Lower lobe of right lung (tissue), 2 donors: ENCODE measurements at regions of chr5 and their contacts with region 1.

Region 1: GRCh38 chr5:18305297-18305924 is 671.2 kb downstream of the TAF11L14 start:
- DNase-seq: no peak
- ATAC-seq: peak in 1 of 2 donors; percentile 54
- H3K4me3 ChIP-seq: no peak overlapping the region
- H3K27ac ChIP-seq: no peak overlapping the region
- H3K4me1 ChIP-seq: no peaks in the 10 kb centered on the region
- H3K27me3 ChIP-seq: peaks cover 9% of the 10 kb centered on the region
- CTCF ChIP-seq: peak; percentile 59

Region 2: DNA sequence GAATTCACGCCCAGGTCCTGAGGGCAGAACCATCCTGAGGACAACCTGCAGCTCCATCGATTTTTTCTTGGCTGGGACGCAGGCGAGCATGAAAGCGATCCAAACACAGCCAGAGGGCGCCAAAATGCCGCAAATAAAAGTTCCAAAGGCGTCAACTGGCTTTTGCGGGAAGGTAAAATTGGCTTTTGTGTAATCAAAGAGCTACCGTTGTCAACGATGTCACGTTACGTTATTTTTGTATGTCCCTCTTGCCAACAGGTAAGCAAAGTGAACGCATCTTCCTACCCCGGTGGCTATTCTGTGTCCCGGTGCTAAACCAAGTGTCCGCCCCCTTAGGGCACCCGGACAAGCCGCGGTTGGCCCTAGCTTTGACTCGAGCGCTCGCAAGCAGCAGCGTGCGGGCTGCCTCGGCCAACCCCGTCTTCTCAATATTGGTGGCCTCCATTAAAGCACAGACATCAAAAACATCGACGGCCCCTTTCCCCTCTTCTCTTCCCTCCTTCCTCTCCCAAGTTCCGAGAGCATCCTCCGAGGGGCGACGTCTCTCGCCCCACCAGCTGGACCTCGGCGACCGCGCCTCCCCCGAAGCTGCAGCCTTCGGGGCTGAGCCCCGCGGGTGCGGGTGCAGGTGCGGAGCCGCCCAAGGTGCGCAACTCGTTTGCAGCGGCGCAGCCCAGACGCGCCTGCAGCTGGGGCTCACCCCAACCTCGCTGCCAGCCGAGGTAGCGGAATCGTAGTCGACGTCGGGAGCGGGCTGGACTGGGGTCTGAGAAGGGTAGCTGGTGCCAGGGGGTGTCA is 1089.0 kb before region 1 on chr5:
- intact Hi-C with region 1: loop called (anchors 10 kb)
- DNase-seq: peak; percentile 80
- ATAC-seq: peak; percentile 70 to 76
- H3K4me3 ChIP-seq: peak overlapping the region; percentile 45
- H3K27ac ChIP-seq: peak overlapping the region; percentile 32
- H3K4me1 ChIP-seq: peaks cover 16% of the 10 kb centered on the region
- H3K27me3 ChIP-seq: peaks cover 16% of the 10 kb centered on the region
- CTCF ChIP-seq: peak; percentile 78